Esophagus muscularis mucosa (tissue), 4 donors: ENCODE measurements at regions of chr6 and their contacts with region 1.

Region 1: GRCh38 chr6:30013291-30013922 is 47.7 kb upstream of the POLR1H start:
- DNase-seq: peak; percentile 82
- H3K4me3 ChIP-seq: no peak overlapping the region
- H3K27ac ChIP-seq: no peak overlapping the region
- H3K4me1 ChIP-seq: peaks cover 0 to 3% (median 0%) of the 10 kb centered on the region in 4 donors
- H3K27me3 ChIP-seq: peaks cover 0 to 26% (median 2%) of the 10 kb centered on the region in 4 donors
- CTCF ChIP-seq: peak; percentile 23 to 92 (median 83)
- EP300 ChIP-seq: no peak
- POLR2A ChIP-seq: no peak

Region 2: DNA sequence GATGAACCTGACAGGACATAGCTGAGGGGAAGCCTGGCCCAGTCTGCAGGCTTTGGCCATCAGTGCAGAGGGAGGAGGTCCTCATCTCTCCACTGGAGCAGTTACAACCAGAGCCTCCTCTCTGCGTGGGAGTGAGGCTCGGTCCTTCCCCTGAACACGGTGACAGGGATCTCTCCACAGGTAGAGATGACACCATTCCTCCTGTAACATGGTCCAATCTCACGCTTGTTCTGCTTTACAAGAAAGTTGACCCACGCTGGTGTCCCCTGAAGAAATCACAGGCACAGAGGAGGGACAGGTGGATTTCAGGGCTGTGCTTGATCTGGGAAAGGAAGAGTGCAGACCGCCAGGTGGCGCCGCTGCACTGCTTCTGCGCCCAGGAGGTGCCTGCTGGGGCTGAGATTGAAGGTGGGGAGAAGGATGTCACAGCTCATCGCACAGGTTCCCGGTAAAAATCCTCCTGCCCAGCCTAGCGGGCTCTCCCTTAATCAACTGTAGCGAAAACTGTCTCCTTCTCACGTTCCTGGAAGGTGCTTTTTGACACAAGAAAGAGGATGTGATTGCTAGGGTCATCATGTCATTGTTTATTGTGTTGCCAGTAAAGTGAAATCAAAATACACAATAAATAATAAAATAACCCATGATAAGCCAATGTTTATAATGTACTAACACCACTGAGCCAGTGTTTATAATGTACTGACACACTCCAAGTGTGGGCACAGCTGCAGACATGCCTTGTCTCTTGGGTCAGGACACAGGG is 165.4 kb before region 1 on chr6:
- intact Hi-C with region 1: loop called (anchors 1 kb)
- DNase-seq: no peak
- H3K4me3 ChIP-seq: no peak overlapping the region
- H3K27ac ChIP-seq: no peak overlapping the region
- H3K4me1 ChIP-seq: peaks cover 0 to 7% (median 6%) of the 10 kb centered on the region in 4 donors
- H3K27me3 ChIP-seq: peaks cover 0 to 70% (median 14%) of the 10 kb centered on the region in 4 donors
- CTCF ChIP-seq: peak; percentile 79 to 97 (median 89)
- EP300 ChIP-seq: no peak
- POLR2A ChIP-seq: no peak